ENCODE measurements at regions of chr12 and their contacts with region 1.

Region 1: DNA sequence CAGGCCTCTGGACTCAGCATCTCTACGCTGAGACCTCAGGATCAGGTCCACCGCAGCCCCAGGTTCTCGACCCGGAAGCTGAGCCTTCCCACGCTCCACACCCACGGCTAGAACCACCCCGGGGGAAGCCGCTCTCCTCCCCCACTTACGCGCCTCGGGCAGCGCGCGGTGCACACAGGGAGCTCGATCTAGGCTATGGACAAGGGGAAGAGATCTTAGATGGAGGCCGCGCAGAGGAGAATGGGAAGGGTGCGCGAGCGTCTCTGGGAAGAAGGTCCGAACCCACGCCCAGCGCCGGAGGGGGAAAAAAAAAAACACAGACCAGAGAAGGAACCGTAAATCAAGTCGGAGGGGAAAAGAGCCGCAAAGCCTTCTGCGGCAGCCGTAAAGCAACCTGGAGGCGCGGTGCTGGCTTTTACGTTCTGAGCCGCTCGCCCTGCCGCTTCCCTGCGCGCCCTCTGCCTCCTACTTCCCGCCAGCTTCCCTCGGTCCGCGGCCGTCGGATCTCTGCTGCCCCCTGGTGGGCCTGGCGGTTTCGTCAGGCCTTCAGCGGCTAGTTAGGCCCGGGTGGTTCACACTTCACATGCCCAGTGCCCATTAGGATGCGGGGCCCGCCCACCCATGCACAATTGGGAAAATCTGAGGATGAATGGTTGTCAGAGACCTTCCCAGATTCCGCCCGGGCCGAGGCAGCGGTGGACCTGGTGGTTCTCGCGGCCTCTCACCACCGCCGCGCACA is at the start of gene RAD52:
- DNase-seq: peak; percentile 96 to 98
- ATAC-seq: peak; percentile 92 to 94
- H3K4me3 ChIP-seq: peak within 1 kb of the TSS; percentile 78 to 94 (median 92)
- H3K27ac ChIP-seq: peak within 1 kb of the TSS; percentile 91 to 97 (median 94)
- H3K4me1 ChIP-seq: peaks cover 16 to 25% of the 10 kb centered on the region in 2 donors
- H3K27me3 ChIP-seq: no peaks in the 10 kb centered on the region
- CTCF ChIP-seq: peak; percentile 96 to 100 (median 99)
- POLR2A ChIP-seq: peak; percentile 81 to 88
- total RNA-seq, gene RAD52: 11.3 to 21.0 (median 14.3) TPM

Region 2: DNA sequence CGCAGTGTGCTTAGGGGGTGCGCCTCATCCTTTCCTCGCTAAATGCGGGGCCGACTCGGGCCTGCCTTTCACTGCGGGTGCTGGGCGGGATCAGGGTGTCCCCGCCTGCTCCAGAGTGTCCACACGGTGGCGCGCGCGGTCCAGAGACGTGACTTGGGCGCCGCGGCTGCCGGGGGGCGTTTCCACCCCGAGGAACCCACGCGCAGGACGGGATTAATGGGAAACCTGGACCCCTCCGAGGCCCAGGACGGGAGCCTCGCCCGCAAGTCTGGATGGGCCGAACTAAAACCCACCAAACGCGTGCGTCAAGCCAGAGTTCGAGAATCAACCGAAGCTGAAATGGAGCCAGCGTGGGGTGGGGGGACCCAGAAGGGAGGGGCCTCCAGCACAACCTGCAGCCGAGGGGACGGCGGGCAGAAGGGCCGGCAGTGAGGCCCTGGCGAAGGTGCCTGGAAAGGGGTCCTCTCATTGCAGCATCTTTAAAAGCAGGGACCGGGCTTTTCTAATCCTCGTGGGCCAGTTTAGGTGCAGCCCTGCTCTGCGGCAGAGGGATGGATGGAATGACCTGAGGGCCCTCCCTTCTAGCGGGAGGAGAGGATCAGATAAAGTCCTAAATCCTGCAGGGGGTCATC is 379.7 kb before region 1 on chr12:
- in situ Hi-C with region 1: loop called in 3 of 4 experiments (anchors 10 to 25 kb)
- intact Hi-C with region 1: loop called (anchors 1 kb)
- DNase-seq: peak; percentile 67 to 83
- ATAC-seq: peak; percentile 41 to 52
- H3K4me3 ChIP-seq: peak overlapping the region; percentile 63 to 74 (median 71)
- H3K27ac ChIP-seq: peak overlapping the region; percentile 86 to 95 (median 92)
- H3K4me1 ChIP-seq: peaks cover 20 to 22% of the 10 kb centered on the region in 2 donors
- H3K27me3 ChIP-seq: no peaks in the 10 kb centered on the region
- CTCF ChIP-seq: peak; percentile 87 to 97 (median 97)
- POLR2A ChIP-seq: no peak

Region 3: DNA sequence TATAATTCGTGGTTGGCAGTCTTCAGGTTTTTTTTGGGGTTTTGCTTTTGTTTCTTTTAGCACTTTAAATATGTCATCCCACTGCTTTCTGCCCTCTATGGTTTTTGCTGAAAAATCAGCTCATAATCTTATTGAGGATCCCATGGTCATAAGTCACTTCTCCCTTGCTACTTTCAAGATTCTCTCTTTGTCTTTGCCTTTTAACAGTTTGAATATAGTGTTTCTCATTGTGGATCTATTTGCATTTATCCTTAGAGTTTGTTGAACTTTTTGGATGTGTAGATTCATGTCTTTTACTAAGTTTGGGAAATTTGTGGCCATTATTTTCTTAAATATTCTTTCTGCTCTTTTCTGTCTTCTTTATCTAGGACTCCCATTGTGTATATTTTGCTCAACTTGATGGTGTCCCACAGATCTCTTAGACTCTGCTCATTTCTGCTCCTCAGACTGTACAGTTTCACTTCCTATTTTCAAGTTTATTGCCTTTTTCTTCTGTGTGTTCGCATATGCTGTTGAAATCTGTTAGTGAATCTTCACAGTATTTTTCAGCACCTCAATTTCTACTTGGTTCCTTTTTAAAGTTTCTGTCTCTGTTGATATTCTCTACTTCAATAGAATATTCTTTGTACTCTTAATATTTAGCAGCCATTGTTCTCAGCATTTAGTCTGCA is 126.5 kb before region 1 on chr12:
- in situ Hi-C with region 1: loop called in 3 of 4 experiments (anchors 5 to 10 kb)
- intact Hi-C with region 1: no loop called
- DNase-seq: no peak
- ATAC-seq: no peak
- H3K4me3 ChIP-seq: no peak overlapping the region
- H3K27ac ChIP-seq: peak overlapping the region in 1 of 4 donors; percentile 3
- H3K4me1 ChIP-seq: peaks cover 10 to 44% of the 10 kb centered on the region in 2 donors
- H3K27me3 ChIP-seq: no peaks in the 10 kb centered on the region
- CTCF ChIP-seq: no peak
- POLR2A ChIP-seq: no peak

Region 4: GRCh38 chr12:913919-914708 is 35.5 kb before region 1 on chr12:
- in situ Hi-C with region 1: no loop called
- intact Hi-C with region 1: no loop called
- DNase-seq: no peak
- ATAC-seq: no peak
- H3K4me3 ChIP-seq: no peak overlapping the region
- H3K27ac ChIP-seq: peak overlapping the region in 2 of 4 donors; percentile 19 to 42
- H3K4me1 ChIP-seq: peaks cover 0 to 3% of the 10 kb centered on the region in 2 donors
- H3K27me3 ChIP-seq: no peaks in the 10 kb centered on the region
- CTCF ChIP-seq: no peak
- POLR2A ChIP-seq: no peak

Region 5: DNA sequence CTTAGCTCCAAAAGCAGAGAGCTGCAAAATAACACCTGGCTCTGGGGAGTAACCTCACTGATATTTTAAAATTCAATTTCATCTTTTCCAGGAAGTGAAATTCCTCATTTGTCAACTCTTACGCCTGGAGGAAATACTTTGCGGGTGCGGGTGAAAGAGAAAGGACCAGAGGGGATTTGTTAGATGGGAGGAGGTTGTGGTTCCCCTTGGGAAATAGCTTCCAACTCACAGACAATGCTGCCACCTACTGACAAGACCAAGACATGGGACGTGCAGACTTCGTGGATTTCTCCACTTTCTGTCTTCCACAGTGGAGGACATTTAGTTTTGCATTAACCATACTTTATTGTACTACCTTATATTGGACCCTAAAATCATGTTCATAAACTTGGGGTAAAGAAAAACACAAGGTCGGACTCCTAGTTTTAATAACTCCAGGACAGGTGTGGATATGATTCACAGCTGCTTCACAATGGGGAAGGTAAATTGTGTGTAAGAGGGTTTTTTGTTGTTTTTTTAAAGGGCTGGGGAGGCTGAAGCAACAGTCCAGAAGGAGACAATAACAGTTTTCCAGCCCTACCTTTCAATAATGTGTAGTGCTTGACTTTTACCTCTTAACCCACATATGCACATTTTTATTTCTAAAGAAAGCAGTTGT is 633.9 kb after region 1 on chr12:
- in situ Hi-C with region 1: no loop called
- intact Hi-C with region 1: loop called (anchors 5 kb)
- DNase-seq: peak; percentile 38 to 53
- ATAC-seq: peak; percentile 71 to 82
- H3K4me3 ChIP-seq: peak overlapping the region in 2 of 4 donors; percentile 27 to 50
- H3K27ac ChIP-seq: no peak overlapping the region
- H3K4me1 ChIP-seq: peaks cover 8 to 20% of the 10 kb centered on the region in 2 donors
- H3K27me3 ChIP-seq: no peaks in the 10 kb centered on the region
- CTCF ChIP-seq: peak; percentile 72 to 85 (median 83)
- POLR2A ChIP-seq: no peak

Measured in gastrocnemius medialis (tissue), 4 donors.